ENCODE measurements at regions of chr3 and their contacts with region 1.

Region 1: GRCh38 chr3:45848392-45848791 is 6.5 kb upstream of the LZTFL1 start:
- DNase-seq: no peak
- ATAC-seq: no peak
- H3K4me3 ChIP-seq: no peak overlapping the region
- H3K4me3 Mint-ChIP-seq: no peak overlapping the region
- H3K27ac ChIP-seq: no peak overlapping the region
- H3K27ac Mint-ChIP-seq: no peak overlapping the region
- H3K4me1 ChIP-seq: peaks cover 0 to 10% of the 10 kb centered on the region in 2 experiments
- H3K4me1 Mint-ChIP-seq: peaks cover 7 to 19% (median 13%) of the 10 kb centered on the region in 3 donors
- H3K27me3 ChIP-seq: peaks cover 0 to 2% of the 10 kb centered on the region in 2 experiments
- H3K27me3 Mint-ChIP-seq: peaks cover 15 to 19% of the 10 kb centered on the region in 2 donors

Region 2: GRCh38 chr3:45929042-45929679 is 80.8 kb after region 1 on chr3:
- CTCF ChIA-PET with region 1: interaction called, 3 to 12 read pairs
- POLR2A ChIA-PET with region 1: no interaction called
- DNase-seq: peak; percentile 22 to 76 (median 59)
- ATAC-seq: peak; percentile 74 to 90 (median 78)
- H3K4me3 ChIP-seq: no peak overlapping the region
- H3K4me3 Mint-ChIP-seq: no peak overlapping the region
- H3K27ac ChIP-seq: no peak overlapping the region
- H3K27ac Mint-ChIP-seq: no peak overlapping the region
- H3K4me1 ChIP-seq: peaks cover 2 to 7% of the 10 kb centered on the region in 2 experiments
- H3K4me1 Mint-ChIP-seq: peaks cover 5 to 26% (median 6%) of the 10 kb centered on the region in 3 donors
- H3K27me3 ChIP-seq: no peaks in the 10 kb centered on the region
- H3K27me3 Mint-ChIP-seq: no peaks in the 10 kb centered on the region

Measured in T-cell (primary cell).